ENCODE measurements at regions of chr2 and their contacts with region 1.

Region 1: DNA sequence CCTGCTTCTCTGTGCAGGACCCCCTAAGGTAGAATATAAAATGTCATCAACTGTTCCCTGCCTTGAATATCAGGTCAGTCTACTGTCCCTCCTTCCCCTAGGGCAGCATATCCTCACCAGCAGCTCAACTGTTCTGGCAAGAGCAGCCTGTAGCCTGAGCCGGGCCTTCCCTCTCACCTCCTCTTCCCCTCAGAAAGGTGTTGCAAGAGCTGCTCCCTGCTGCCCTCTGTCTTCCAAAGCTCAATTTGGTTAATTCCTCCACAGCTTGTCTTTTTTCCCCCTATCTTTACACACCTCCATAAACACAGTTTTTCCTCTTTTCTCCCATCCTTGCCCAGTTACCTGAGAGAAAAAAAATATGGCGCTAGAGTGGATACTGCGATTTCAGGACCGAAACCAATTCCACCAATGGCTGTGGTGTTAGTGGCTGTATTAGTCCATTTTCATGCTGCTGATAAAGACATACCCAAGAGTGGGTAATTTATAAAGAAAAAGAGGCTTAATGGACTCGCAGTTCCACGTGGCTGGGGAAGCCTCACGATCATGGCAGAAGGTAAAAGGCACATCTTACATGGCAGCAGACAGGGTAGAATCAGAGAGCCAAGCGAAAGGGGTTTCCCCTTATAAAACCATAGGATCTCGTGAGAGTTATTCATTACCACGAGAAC is 184.7 kb downstream of the MREG start:
- H3K4me3 ChIP-seq: no peak overlapping the region
- H3K27ac ChIP-seq: no peak overlapping the region
- H3K4me1 ChIP-seq: peaks cover 7% of the 10 kb centered on the region; the same call in 1 of the 2 replicates
- CTCF ChIP-seq: peak; percentile 40

Region 2: GRCh38 chr2:215454519-215455246 is 374.0 kb before region 1 on chr2:
- CTCF ChIA-PET with region 1: interaction called, 10 read pairs
- POLR2A ChIA-PET with region 1: no interaction called
- H3K4me3 ChIP-seq: no peak overlapping the region
- H3K27ac ChIP-seq: no peak overlapping the region
- H3K4me1 ChIP-seq: no peaks in the 10 kb centered on the region
- CTCF ChIP-seq: no peak